Left cardiac atrium (tissue), 4 donors: ENCODE measurements at regions of chr4 and their contacts with region 1.

Region 1: DNA sequence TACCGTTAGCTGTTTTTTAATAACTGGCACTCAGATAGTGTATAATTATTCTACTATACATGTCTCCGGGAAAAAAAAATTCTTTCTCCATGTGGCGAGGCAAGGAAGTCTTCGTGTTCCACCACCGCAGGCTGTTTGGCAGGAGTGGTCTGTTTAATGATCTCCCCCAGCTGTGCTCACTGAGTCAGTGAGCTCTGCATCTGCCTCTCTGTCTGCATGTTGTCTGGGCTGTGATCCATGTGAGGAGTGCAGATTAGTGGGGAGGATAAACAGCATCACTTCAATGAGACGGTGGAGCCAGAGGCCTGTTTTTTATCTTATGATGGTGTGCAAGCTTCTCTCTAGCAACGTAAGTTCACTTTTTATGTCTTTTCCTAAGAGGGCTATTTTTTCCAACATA is 69.8 kb downstream of the RPS3A start:
- DNase-seq: peak; percentile 70
- ATAC-seq: peak; percentile 90 to 98

Region 2: DNA sequence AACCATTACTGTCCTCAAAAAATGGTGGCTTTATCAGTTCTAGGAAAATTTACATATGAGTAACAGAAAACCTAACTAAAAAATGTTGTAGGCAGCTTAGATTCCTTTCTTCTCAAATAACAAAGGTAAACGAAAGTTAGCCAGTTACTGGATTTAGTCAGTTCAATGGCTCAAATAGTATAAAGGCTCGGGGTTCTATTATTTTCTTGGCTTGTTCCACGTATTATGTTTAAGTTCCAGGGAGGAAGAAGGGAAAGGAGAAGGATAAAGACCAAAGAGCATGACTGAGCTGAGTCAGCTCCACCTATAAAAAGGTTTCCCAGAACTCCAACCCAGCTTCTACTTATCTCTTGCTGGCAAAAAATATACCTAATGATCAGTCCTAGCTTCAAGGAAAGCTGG is 628.3 kb before region 1 on chr4:
- intact Hi-C with region 1: no loop called
- DNase-seq: no peak
- ATAC-seq: no peak

Region 3: GRCh38 chr4:151129801-151130200 is 39.4 kb before region 1 on chr4:
- intact Hi-C with region 1: no loop called
- DNase-seq: no peak
- ATAC-seq: no peak

Region 4: DNA sequence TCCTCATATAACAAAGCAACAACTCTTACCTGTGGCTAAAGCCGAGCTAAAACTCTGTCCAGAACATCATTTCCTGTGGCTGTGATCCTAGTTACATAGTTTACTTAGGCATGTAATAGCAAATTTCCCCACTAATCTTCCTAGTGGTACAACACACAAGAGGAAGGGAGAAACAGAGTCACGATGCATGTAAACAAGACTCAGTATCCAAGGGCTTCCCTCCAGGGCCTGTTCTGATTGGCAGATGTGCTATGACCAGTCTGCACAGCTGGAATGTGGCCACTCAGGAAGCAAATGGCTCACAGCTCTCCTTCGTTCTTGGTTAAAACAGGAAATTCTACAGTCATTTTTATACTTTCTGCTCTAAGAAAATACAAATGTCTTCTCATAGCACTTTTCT is 58.5 kb after region 1 on chr4:
- intact Hi-C with region 1: loop called in 1 of 2 experiments (anchors 10 kb)
- DNase-seq: peak; percentile 65
- ATAC-seq: peak; percentile 85 to 92